Activated B cell treated with CpG ODN at 0.5 μM for 24 hours (primary cell): ENCODE measurements at regions of chr4 and their contacts with region 1.

Region 1: DNA sequence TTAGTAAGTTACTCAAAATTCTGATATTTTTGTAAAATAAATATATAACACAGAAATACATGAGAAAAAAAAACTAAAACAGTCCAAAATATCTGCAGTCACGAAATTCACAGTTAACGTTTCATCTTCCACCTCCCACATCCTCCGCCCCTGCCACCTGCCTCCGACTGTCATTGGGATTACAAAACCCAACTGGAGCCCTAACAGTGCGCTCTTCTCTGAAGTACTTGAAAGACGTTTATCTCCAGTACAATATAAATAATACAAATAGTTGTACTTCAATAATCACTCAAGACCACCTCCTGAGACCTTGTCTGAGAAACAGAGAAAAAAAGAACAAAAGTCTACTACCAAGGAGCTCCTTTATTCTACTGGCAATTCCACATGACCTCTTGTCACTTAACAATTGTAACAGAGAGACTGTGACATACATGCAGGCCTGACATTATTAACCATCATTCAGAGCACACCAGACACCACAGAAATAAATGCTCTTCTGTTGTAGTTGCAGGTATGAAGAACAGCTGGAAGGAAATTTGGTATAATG is 280.6 kb downstream of the PPP3CA start:
- DNase-seq: no peak
- ATAC-seq: no peak
- H3K4me3 Mint-ChIP-seq: no peak overlapping the region
- H3K27ac Mint-ChIP-seq: no peak overlapping the region
- H3K4me1 Mint-ChIP-seq: peaks cover 12% of the 10 kb centered on the region
- H3K27me3 Mint-ChIP-seq: no peaks in the 10 kb centered on the region
- CTCF ChIP-seq: no peak

Region 2: DNA sequence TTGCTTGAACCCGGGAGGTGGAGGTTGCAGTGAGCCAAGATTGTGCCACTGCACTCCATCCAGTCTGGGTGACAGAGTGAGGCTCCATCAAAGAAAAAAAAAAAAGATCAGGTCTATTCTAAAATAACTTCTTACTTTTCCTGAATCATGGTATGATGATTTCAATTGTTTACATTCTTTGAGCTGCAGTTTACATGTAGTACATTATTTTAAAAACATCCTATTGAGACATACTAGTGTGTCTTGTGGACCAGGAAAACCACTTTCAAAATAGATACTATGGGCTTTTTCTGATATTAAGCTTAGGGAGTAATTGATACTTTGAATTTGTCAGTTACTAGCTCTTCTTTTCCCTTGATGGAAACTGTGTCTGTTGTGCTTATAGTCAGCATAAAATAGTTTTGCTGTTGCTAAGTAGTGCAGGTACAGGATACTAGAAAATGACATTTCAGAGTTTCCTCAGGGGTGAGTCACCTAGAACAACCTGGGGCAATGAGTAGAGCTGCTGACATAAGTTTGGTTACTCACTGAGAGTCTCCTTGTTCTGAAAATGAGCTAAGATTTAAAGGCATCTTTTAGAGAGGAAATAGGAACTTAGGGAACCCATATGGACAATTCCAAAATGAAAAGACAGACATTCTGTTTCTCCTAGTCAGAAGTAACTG is 1355.9 kb before region 1 on chr4:
- CTCF ChIA-PET with region 1: no interaction called
- POLR2A ChIA-PET with region 1: no interaction called
- intact Hi-C with region 1: no loop called
- DNase-seq: no peak
- ATAC-seq: no peak
- H3K4me3 Mint-ChIP-seq: no peak overlapping the region
- H3K27ac Mint-ChIP-seq: no peak overlapping the region
- H3K4me1 Mint-ChIP-seq: no peaks in the 10 kb centered on the region
- H3K27me3 Mint-ChIP-seq: peaks cover 2% of the 10 kb centered on the region
- CTCF ChIP-seq: no peak

Region 3: DNA sequence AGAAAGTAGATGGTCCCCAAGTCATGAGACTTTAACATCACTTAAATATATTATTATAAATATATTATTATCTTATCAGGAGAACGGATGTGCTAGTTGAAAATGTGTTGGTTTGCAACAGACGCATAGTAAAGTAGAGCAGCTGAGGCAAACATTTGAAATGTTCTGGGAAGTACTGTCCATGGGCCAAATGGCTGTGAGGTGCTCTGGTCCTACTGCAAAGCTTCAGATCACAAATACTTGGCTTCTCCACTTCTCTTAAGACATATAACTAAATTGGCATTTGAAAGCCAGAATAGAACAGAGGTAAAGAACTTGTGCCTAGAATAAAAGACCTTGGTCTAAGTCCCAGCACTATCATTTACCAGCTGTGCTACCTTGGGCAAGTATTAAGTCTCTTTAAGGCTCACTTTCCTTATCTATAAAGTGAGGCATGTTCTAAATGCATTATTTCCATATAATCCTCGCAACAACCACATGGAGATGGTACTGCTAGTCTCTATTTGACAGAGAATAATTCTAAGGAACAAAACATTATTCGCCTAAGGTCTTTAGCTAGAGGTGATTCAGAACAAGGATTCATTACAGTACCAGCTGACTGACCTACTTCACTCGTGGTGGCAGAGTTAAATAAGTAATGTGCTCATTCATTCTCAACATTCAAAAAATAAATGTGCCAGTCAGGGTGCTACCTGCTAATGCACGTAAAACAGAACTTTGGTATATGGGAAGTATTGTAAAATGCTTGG is 16.4 kb before region 1 on chr4:
- CTCF ChIA-PET with region 1: no interaction called
- POLR2A ChIA-PET with region 1: no interaction called
- intact Hi-C with region 1: loop called (anchors 1 kb)
- DNase-seq: no peak
- ATAC-seq: no peak
- H3K4me3 Mint-ChIP-seq: no peak overlapping the region
- H3K27ac Mint-ChIP-seq: no peak overlapping the region
- H3K4me1 Mint-ChIP-seq: peaks cover 3% of the 10 kb centered on the region
- H3K27me3 Mint-ChIP-seq: no peaks in the 10 kb centered on the region
- CTCF ChIP-seq: no peak

Region 4: GRCh38 chr4:101078950-101079349 is 12.3 kb after region 1 on chr4:
- CTCF ChIA-PET with region 1: no interaction called
- POLR2A ChIA-PET with region 1: no interaction called
- intact Hi-C with region 1: loop called (anchors 2 kb)
- DNase-seq: no peak
- ATAC-seq: no peak
- H3K4me3 Mint-ChIP-seq: no peak overlapping the region
- H3K27ac Mint-ChIP-seq: no peak overlapping the region
- H3K4me1 Mint-ChIP-seq: peaks cover 35% of the 10 kb centered on the region
- H3K27me3 Mint-ChIP-seq: no peaks in the 10 kb centered on the region
- CTCF ChIP-seq: no peak